Activated CD4-positive, alpha-beta T cell treated with anti-CD3 and anti-CD28 coated beads, Interleukin-2, amount 10 ng/mL, durations not matched to agents 24 days and 14 days (primary cell): ENCODE measurements at regions of chr3 and their contacts with region 1.

Region 1: DNA sequence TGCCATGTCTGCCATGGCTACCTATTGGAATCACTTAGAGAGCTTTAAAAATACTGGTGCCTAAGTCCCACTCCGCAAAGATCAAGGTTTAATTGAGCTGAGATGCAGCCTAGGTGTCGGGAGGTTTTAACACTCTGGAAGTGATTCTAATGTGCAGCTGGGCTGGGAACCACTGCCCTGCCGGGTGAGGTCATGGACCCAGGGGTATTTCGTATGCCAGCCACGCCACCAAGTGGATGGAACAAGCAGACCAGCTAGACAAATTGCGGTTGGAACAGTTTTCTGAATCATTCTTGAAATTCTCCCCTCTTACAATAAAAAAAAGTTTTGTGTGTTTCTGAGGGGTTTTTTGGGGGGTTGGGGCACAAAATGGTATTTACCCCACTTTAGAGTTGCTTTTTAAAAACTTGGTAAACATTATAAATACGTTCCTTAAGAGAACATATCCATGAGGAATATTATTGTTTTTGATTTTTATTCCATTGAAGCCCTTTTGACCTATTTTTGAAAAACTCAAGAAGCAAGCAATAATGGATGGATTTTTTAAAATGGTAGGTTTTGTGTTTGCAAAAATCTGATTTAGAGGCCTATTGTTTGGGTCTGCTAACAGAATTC is 66.2 kb upstream of the CSTA start:
- DNase-seq: peak; percentile 85
- H3K4me3 Mint-ChIP-seq: no peak overlapping the region
- H3K27ac Mint-ChIP-seq: no peak overlapping the region
- H3K4me1 Mint-ChIP-seq: peaks cover 16% of the 10 kb centered on the region
- H3K27me3 Mint-ChIP-seq: peaks cover 12% of the 10 kb centered on the region

Region 2: GRCh38 chr3:121883507-121883906 is 375.4 kb before region 1 on chr3:
- intact Hi-C with region 1: loop called (anchors 5 kb)
- DNase-seq: no peak
- H3K4me3 Mint-ChIP-seq: no peak overlapping the region
- H3K27ac Mint-ChIP-seq: no peak overlapping the region
- H3K4me1 Mint-ChIP-seq: no peaks in the 10 kb centered on the region
- H3K27me3 Mint-ChIP-seq: no peaks in the 10 kb centered on the region

Region 3: GRCh38 chr3:122365073-122365472 is 106.2 kb after region 1 on chr3:
- intact Hi-C with region 1: loop called (anchors 5 kb)
- DNase-seq: no peak
- H3K4me3 Mint-ChIP-seq: peak overlapping the region; percentile 30
- H3K27ac Mint-ChIP-seq: peak overlapping the region; percentile 95
- H3K4me1 Mint-ChIP-seq: peaks cover 33% of the 10 kb centered on the region
- H3K27me3 Mint-ChIP-seq: no peaks in the 10 kb centered on the region